HCT116 (cell line): ENCODE measurements at regions of chr15 and their contacts with region 1.

Region 1: DNA sequence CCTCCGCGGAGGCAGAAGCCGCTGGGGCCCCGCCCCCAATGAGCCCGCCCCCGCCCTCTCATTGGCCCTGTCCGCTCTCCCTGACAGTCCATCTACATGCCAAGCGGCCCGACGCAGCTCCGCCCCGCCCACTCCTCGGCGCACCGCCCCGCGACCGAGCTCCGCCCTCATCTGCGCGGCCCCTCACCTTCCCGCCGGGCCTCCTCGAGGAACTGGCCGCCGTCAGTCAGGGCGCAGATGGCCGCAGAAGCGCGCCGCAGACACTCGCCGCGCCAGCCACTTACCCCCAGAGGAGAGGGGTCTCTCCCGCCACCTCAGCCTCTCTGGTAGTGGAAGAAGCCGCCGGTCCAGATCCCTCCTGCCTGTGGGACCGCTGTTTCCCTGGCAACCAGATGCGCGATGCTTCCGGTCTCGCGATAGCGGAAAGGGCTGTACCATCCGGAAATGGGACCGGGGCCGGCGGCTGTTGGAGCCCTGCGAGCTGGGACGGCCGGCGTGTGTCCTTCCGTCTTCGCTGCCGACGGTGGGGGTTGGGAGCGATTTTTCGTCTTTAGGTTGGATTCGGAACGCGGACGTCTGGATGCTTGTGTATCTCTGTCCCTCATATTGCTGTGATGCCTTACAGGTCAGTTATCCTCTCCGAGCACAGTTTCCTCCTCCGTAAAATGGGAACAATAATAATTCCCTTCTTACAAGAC is at the start of gene FSIP1:
- DNase-seq: peak; percentile 92
- ATAC-seq: peak; percentile 99
- H3K4me3 ChIP-seq: peak within 1 kb of the TSS; percentile 75 to 80
- H3K27ac ChIP-seq: peak within 1 kb of the TSS; percentile 47
- H3K4me1 ChIP-seq: peaks cover 23% of the 10 kb centered on the region in 2 experiments
- H3K27me3 ChIP-seq: no peaks in the 10 kb centered on the region
- CTCF ChIP-seq: no peak
- POLR2A ChIP-seq: no peak
- RAD21 ChIP-seq: no peak
- total RNA-seq, gene FSIP1: 0.42 TPM

Region 2: GRCh38 chr15:39767921-39768320 is 14.7 kb before region 1 on chr15:
- CTCF ChIA-PET with region 1: no interaction called
- POLR2A ChIA-PET with region 1: no interaction called
- RAD21 ChIA-PET with region 1: no interaction called
- intact Hi-C with region 1: no loop called
- DNase-seq: no peak
- ATAC-seq: peak; percentile 49; the same call in 1 of the 2 replicates
- H3K4me3 ChIP-seq: no peak overlapping the region
- H3K27ac ChIP-seq: no peak overlapping the region
- H3K4me1 ChIP-seq: no peaks in the 10 kb centered on the region
- H3K27me3 ChIP-seq: no peaks in the 10 kb centered on the region
- CTCF ChIP-seq: 0 out of 6 replicates have a peak, but pooled peaks of 1 of the 3 experiments have one; percentile 9
- POLR2A ChIP-seq: no peak
- RAD21 ChIP-seq: no peak

Region 3: GRCh38 chr15:39934397-39935071 is 151.9 kb after region 1 on chr15:
- CTCF ChIA-PET with region 1: no interaction called
- POLR2A ChIA-PET with region 1: no interaction called
- RAD21 ChIA-PET with region 1: interaction called in 1 of 2 experiments, 4 read pairs
- intact Hi-C with region 1: loop called (anchors 2 kb)
- DNase-seq: no peak
- ATAC-seq: no peak
- H3K4me3 ChIP-seq: peak overlapping the region; percentile 72 to 80
- H3K27ac ChIP-seq: peak overlapping the region; percentile 64
- H3K4me1 ChIP-seq: peaks cover 11 to 33% of the 10 kb centered on the region in 2 experiments
- H3K27me3 ChIP-seq: no peaks in the 10 kb centered on the region
- CTCF ChIP-seq: no peak
- POLR2A ChIP-seq: no peak
- RAD21 ChIP-seq: no peak

Region 4: DNA sequence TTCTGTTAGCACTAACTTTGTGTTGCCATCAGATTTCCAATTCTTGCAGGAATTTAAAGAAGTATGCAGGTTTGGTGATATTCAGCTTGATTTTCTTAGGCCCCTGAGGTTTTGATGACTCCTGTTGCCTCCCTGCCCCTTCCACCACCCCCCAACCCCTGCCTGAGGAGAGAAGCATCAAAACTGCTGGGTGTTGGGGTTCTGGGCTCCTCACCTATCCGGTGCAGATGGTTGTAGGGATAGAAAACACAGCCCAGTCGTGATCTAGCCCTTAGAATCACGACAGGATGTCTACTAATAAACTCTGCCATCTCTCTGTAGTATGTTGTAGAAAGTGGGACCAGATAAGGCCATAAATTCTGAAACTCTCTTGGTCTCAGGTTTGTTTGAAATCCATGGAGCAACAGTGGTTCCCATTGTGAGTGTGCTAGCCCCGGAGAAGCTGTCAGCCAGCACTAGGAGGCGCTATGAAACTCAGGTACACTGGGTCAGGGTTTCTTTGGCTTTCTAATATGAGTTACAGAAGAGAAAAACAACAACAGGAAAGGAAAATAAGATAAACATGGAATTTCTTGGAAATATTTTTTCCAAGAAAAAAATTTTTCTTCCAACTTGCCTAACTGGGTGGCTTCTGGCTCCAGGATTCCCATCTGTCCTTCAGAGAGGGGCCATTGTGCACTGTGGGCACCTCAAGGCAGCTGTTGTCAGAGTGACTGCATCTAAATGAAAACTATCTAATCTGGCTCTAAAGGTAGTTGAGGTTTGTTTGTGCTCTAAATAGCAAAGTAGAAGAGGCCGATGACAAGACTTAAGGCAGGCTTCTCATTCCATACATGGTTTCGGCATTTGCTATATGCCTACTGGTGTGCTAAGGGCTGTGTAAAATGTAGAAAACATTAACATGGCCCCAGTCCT is 247.6 kb after region 1 on chr15:
- CTCF ChIA-PET with region 1: no interaction called
- POLR2A ChIA-PET with region 1: no interaction called
- RAD21 ChIA-PET with region 1: no interaction called
- intact Hi-C with region 1: loop called (anchors 5 kb)
- DNase-seq: no peak
- ATAC-seq: peak; percentile 90
- H3K4me3 ChIP-seq: no peak overlapping the region
- H3K27ac ChIP-seq: no peak overlapping the region
- H3K4me1 ChIP-seq: no peaks in the 10 kb centered on the region
- H3K27me3 ChIP-seq: no peaks in the 10 kb centered on the region
- CTCF ChIP-seq: peak; percentile 36 to 82 (median 70); a peak in 5 of 6 replicates
- POLR2A ChIP-seq: no peak
- RAD21 ChIP-seq: peak; percentile 36

Region 5: GRCh38 chr15:40252438-40253166 is 470.0 kb after region 1 on chr15:
- CTCF ChIA-PET with region 1: no interaction called
- POLR2A ChIA-PET with region 1: no interaction called
- RAD21 ChIA-PET with region 1: no interaction called
- intact Hi-C with region 1: no loop called
- DNase-seq: peak; percentile 42
- ATAC-seq: peak; percentile 87
- H3K4me3 ChIP-seq: peak overlapping the region; percentile 65 to 97
- H3K27ac ChIP-seq: peak overlapping the region; percentile 79
- H3K4me1 ChIP-seq: peaks cover 14 to 37% of the 10 kb centered on the region in 2 experiments
- H3K27me3 ChIP-seq: no peaks in the 10 kb centered on the region
- CTCF ChIP-seq: no peak
- POLR2A ChIP-seq: peak; percentile 41
- RAD21 ChIP-seq: no peak